Activated T-helper 1 cell treated with anti-CD3 and anti-CD28 coated beads, Interleukin-12 subunit alpha, Interleukin-12 subunit beta, Interleukin-2, Interleukin-4 antibody, amounts not matched to agents 30 ng/mL and 10 ng/mL and 1 ng/mL, durations not matched to agents 14 hours and 24 hours and 36 hours (primary cell): ENCODE measurements at regions of chr14 and their contacts with region 1.

Region 1: GRCh38 chr14:70567791-70568190 is 32.7 kb downstream of the MED6 start:
- DNase-seq: no peak
- H3K4me3 Mint-ChIP-seq: no peak overlapping the region
- H3K27ac Mint-ChIP-seq: no peak overlapping the region
- H3K4me1 Mint-ChIP-seq: no peaks in the 10 kb centered on the region
- H3K27me3 Mint-ChIP-seq: no peaks in the 10 kb centered on the region

Region 2: GRCh38 chr14:68843471-68844209 is 1724.2 kb before region 1 on chr14:
- intact Hi-C with region 1: no loop called
- DNase-seq: peak; percentile 56
- H3K4me3 Mint-ChIP-seq: peak overlapping the region; percentile 13
- H3K27ac Mint-ChIP-seq: no peak overlapping the region
- H3K4me1 Mint-ChIP-seq: peaks cover 24% of the 10 kb centered on the region
- H3K27me3 Mint-ChIP-seq: peaks cover 13% of the 10 kb centered on the region

Region 3: DNA sequence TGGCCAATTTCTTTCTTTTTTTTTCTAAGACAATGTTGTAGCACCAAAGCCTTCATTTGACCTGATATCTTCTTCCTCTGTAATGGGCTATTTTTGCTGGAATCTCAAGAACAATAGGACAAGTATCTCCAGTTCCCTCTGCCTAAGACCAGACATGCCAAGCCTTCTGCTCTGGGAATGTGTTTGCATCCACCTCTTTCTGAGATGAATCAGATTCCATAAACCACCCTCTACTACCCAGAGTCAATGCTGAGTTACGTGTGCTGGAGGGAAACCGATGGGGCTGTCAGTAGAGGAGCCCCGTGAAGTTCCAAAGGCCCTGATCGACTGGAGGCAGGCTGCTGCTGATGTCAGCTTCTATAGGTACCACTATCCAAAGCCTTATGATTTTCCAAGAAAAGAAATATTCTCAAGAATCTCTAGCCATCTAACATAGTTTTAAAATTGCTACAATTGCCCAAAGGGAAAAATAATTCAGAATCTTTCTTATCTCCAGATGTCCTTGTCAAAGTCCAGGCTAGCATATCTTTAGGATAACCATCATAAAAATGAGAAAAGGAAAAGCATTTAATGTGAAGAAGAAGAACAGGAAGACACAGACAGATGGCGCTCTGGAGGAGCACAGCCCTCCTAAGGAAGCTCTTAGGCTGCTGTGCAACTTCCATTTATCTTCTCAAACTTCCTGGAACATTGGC is 481.0 kb before region 1 on chr14:
- intact Hi-C with region 1: loop called (anchors 2 kb)
- DNase-seq: no peak
- H3K4me3 Mint-ChIP-seq: no peak overlapping the region
- H3K27ac Mint-ChIP-seq: no peak overlapping the region
- H3K4me1 Mint-ChIP-seq: no peaks in the 10 kb centered on the region
- H3K27me3 Mint-ChIP-seq: peaks cover 6% of the 10 kb centered on the region